BJ (cell line): ENCODE measurements at regions of chr19 and their contacts with region 1.

Region 1: GRCh38 chr19:13553880-13554400 is 47.7 kb upstream of the CACNA1A start:
- DNase-seq: no peak
- H3K4me3 ChIP-seq: no peak overlapping the region
- H3K27me3 ChIP-seq: no peaks in the 10 kb centered on the region; the same call in none of the 2 replicates
- CTCF ChIP-seq: no peak

Region 2: DNA sequence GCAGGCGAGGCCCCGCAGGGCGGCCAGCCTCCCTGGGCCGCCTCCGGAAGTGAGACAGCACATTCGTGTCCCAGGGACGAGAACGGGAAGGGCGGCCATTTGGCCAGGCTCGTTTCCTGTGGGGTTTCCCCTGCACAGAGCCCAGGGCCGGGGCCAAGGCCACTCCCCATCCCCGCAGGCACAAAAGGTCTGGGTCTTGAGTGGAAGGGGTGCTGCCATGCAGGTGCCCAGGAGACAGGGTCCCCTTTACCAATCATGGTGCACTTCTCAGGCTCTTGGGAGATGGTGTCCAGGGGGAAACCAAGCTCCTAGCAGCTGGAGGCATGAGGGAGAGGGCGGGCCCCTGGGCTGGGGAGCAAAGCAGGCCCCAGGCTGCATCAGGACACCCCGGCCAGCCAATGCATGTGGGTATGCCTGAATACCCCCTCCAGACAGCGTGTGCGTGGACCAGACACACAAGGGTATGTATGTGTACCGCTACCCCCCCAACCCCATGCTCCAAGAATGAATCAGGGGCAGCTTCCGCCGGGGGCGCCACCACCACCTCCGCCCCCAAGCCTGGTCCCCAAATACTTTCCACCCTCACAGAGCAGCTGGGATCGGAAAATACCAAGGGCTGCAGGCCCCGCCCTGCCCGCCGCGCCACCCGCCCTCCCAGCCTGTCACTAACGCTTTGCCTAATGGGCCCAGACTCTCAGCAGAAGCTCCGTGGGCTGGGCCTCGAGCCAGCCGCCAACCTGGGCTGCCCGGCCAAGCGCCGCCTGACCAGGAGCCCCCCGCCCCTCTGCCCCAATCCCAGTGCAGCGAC is 285.4 kb after region 1 on chr19:
- CTCF ChIA-PET with region 1: no interaction called
- POLR2A ChIA-PET with region 1: interaction called, 25 read pairs
- DNase-seq: no peak
- H3K4me3 ChIP-seq: peak overlapping the region; percentile 66
- H3K27me3 ChIP-seq: no peaks in the 10 kb centered on the region
- CTCF ChIP-seq: no peak